Posterior vena cava (tissue), 2 donors: ENCODE measurements at regions of chr3 and their contacts with region 1.

Region 1: GRCh38 chr3:196268270-196269163 is 19.0 kb downstream of the PCYT1A start:
- DNase-seq: no peak

Region 2: GRCh38 chr3:195394700-195395099 is 873.8 kb before region 1 on chr3:
- intact Hi-C with region 1: no loop called
- DNase-seq: no peak

Region 3: GRCh38 chr3:195438371-195438770 is 830.1 kb before region 1 on chr3:
- intact Hi-C with region 1: loop called in 1 of 2 experiments (anchors 5 kb)
- DNase-seq: no peak

Region 4: GRCh38 chr3:196298521-196298920 is 30.0 kb after region 1 on chr3:
- intact Hi-C with region 1: no loop called
- DNase-seq: no peak